HCT116 (cell line): ENCODE measurements at regions of chr2 and their contacts with region 1.

Region 1: DNA sequence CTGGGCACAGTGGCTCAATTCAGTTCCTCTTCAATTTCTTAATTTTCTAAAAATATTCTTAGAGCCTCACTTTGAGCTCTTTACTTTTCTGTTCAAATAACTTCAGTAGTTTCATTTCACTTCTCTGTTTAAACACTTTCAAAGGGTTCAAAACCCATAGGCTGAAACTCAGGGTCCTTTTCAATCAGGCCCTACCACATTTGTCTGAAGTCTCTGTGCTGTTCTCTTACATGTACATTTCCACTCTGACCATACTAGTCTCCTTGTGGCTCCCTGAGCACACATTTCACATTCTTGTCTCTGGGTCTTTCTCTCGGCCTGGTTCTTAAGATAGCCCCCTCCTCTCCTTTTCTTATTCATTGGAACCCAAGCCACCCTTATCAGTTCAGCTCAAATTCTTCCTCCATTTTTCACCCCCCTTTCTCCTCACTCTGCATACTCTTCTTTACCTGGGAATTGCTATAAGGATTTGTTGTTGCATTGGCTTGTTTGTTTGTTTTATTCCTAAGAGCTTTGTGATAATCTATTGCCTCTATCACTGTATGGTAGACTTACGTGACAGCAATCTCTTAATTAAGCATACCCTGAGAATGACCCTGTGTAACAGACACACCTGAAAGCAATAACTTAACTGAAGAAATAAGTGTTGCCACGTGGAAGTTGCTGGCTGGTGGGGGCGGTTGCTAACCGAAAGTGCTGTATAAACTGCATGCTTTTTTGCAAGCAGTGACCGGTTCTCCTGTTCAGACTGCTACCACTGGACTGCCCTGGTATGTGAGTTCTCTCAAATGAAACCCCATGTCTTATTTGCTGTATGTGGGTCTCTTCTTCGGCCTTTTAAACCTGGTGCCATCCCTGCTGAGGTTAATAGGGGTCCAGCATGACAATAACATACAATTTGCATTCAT is 27.7 kb upstream of the ACADL start:
- DNase-seq: no peak
- ATAC-seq: no peak
- H3K4me3 ChIP-seq: no peak overlapping the region
- H3K27ac ChIP-seq: no peak overlapping the region
- H3K4me1 ChIP-seq: no peaks in the 10 kb centered on the region
- H3K27me3 ChIP-seq: no peaks in the 10 kb centered on the region
- CTCF ChIP-seq: no peak
- POLR2A ChIP-seq: no peak
- RAD21 ChIP-seq: no peak

Region 2: GRCh38 chr2:209577376-209578357 is 675.3 kb before region 1 on chr2:
- CTCF ChIA-PET with region 1: no interaction called
- POLR2A ChIA-PET with region 1: no interaction called
- RAD21 ChIA-PET with region 1: no interaction called
- intact Hi-C with region 1: no loop called
- DNase-seq: peak; percentile 6
- ATAC-seq: no peak
- H3K4me3 ChIP-seq: no peak overlapping the region
- H3K27ac ChIP-seq: no peak overlapping the region
- H3K4me1 ChIP-seq: no peaks in the 10 kb centered on the region
- H3K27me3 ChIP-seq: no peaks in the 10 kb centered on the region
- CTCF ChIP-seq: peak in 2 of 3 experiments; percentile 51 to 60; a peak in 3 of 6 replicates
- POLR2A ChIP-seq: no peak
- RAD21 ChIP-seq: peak; percentile 59

Region 3: DNA sequence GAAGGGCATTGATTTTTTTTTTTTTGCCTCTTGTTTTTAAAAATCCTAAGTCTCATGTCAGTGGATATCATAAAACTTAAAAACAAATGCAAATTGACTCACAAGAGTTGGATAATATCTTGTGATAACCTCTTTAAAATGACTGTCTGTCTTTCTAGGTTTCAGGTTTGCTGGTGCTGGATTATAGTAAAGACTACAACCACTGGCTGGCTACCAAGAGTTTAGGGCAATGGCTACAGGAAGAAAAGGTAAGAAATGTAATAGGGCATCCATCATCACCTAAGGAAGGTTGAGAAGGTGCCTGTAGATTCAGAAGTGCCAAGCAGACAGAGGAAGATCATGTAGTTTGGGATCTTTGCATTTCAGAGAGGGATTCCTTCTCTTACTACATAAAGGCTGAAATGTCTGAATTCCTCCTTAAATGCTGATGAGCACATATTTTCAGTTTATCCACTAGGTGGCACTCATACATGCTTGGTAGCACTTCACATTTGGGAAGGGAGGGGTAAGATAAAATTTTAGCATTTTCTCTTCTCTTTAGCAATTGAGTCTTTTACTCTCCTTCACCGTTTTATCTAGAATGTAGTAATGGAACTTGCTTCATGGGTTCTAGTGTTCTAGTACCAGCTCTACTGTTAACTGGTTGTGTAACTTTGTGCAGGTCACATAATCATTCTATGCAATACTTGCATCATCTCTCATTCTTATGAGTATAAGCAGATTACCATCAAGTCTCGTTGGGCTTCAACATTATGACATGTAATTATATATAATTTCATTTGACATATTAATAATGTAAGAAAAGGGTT is 324.5 kb after region 1 on chr2:
- CTCF ChIA-PET with region 1: no interaction called
- POLR2A ChIA-PET with region 1: no interaction called
- RAD21 ChIA-PET with region 1: no interaction called
- intact Hi-C with region 1: loop called (anchors 5 kb)
- DNase-seq: peak; percentile 33
- ATAC-seq: peak; percentile 71; the same call in 1 of the 2 replicates
- H3K4me3 ChIP-seq: no peak overlapping the region
- H3K27ac ChIP-seq: no peak overlapping the region
- H3K4me1 ChIP-seq: no peaks in the 10 kb centered on the region
- H3K27me3 ChIP-seq: no peaks in the 10 kb centered on the region
- CTCF ChIP-seq: peak; percentile 52 to 85 (median 75); a peak in 5 of 6 replicates
- POLR2A ChIP-seq: no peak
- RAD21 ChIP-seq: peak; percentile 69